Endothelial cell of umbilical vein (primary cell): ENCODE measurements at regions of chr9 and their contacts with region 1.

Region 1: DNA sequence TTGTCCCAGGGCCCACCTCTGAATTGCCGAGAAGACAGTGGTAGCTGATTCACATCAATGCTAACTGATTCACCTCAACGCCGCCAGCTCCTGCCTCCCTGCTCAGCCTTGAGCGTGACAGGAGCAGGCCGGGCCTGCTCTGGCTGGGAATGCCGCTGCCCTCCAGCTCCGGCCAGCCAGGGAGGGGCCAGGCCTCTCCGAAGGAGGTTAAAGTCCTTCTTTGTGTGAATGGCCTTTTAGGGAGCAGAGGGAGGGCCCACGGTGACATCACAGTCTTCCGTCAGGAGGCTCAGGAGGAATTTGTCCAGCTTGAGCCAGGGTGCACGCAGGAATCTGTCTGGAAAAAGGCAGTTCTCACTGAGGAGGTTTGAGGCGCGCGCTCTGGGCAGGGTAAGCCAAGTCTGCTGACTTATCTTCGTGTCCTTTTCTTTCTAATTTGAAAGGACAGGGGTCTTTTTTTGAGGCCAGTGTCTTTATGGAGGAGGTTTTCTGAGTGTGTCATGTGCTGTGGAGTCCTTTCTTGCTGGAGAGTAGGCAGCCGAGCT is 82.7 kb downstream of the C9orf152 start:
- DNase-seq: peak; percentile 81
- H3K4me3 ChIP-seq: no peak overlapping the region
- H3K27ac ChIP-seq: peak overlapping the region; percentile 79
- H3K4me1 ChIP-seq: peaks cover 60% of the 10 kb centered on the region
- H3K27me3 ChIP-seq: no peaks in the 10 kb centered on the region
- CTCF ChIP-seq: no peak
- POLR2A ChIP-seq: no peak

Region 2: DNA sequence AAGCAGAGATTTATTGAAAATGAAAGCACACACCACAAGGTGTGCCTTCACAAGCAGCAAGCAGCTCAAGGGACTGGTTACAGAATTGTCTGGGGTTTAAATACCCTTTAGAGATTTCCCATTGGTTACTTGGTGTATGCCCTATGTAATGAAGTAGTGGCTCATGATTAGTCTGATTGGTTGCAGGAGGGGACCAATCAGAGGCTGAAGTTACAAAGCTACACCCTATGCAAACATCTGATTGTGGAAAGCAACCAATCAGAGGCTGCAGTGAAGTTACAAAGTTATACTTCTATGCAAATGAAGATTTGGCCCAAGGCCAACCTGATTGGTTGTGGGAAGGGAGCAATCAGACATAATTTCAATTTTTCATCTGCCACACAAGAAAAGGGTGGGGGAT is 37.2 kb before region 1 on chr9:
- CTCF ChIA-PET with region 1: interaction called, 15 read pairs
- POLR2A ChIA-PET with region 1: no interaction called
- dilution Hi-C with region 1: no loop called
- intact Hi-C with region 1: no loop called
- DNase-seq: no peak
- H3K4me3 ChIP-seq: no peak overlapping the region
- H3K27ac ChIP-seq: no peak overlapping the region
- H3K4me1 ChIP-seq: peaks cover 34% of the 10 kb centered on the region
- H3K27me3 ChIP-seq: no peaks in the 10 kb centered on the region
- CTCF ChIP-seq: no peak
- POLR2A ChIP-seq: no peak